ENCODE measurements at regions of chr1 and their contacts with region 1.

Region 1: DNA sequence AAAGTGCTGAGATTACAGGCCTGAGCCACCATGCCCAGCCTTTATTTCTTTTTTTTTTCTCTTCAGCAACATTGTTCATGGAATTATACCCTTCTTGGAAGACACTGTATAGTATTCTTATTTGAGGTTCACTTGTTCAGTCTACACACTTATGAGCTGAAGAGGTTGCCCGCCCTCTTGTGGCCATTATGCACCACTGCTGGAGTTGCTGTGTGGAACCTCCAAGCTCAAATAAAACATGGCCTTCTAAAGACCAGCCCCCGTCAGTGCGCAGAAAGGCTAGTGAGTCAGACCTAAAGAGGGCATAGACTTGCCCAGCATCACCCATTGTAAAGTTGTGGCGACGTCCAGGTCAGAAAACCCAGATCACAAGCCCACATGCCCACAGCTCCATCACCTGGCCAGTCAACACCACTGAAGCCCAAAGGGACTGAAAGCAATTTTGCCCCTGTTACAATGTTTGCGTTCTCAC is 20.4 kb downstream of the LURAP1 start:
- DNase-seq: peak; percentile 87
- H3K4me3 ChIP-seq: no peak overlapping the region
- H3K27ac ChIP-seq: no peak overlapping the region
- H3K4me1 ChIP-seq: peaks cover 2% of the 10 kb centered on the region
- H3K27me3 ChIP-seq: no peaks in the 10 kb centered on the region
- CTCF ChIP-seq: peak; percentile 88 to 98
- POLR2A ChIP-seq: no peak

Region 2: DNA sequence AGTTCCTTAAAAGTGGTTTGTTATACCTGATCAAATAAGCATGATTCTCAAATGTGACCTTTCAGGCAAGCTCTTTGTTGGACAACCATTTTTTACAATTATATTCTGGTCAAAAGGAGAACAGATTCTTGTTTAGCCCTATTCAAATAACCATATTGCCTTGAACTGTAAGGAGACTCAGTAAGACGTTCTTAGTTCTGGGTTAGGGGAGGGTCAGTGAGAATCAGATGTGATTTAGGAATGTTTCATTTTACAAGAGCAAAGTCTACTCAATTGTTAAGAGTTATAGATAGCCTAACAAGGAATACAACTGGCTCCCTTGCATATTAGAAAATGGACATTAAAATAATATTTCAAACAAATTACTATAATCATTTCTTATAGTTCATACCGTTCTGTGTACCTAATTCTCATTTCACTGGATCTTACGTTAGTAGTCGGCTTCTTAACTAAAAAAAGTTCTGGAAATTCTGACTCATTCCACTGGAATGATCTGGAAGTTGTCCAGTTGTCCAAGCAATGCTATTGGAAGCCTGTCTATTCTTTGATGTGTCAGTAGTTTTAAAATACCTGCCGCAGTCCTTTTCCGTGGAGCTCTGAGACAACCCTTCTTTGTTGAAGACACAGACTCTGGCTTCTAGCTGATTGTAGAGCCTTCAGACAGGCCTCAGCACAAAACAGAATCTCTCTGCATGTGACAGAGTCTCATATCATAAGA is 331.3 kb before region 1 on chr1:
- CTCF ChIA-PET with region 1: no interaction called
- POLR2A ChIA-PET with region 1: no interaction called
- dilution Hi-C with region 1: no loop called
- intact Hi-C with region 1: loop called (anchors 5 kb)
- DNase-seq: peak; percentile 94
- H3K4me3 ChIP-seq: peak overlapping the region in 1 of 3 experiments; percentile 32
- H3K27ac ChIP-seq: peak overlapping the region; percentile 60
- H3K4me1 ChIP-seq: peaks cover 17% of the 10 kb centered on the region
- H3K27me3 ChIP-seq: no peaks in the 10 kb centered on the region
- CTCF ChIP-seq: no peak
- POLR2A ChIP-seq: peak; percentile 32

Region 3: DNA sequence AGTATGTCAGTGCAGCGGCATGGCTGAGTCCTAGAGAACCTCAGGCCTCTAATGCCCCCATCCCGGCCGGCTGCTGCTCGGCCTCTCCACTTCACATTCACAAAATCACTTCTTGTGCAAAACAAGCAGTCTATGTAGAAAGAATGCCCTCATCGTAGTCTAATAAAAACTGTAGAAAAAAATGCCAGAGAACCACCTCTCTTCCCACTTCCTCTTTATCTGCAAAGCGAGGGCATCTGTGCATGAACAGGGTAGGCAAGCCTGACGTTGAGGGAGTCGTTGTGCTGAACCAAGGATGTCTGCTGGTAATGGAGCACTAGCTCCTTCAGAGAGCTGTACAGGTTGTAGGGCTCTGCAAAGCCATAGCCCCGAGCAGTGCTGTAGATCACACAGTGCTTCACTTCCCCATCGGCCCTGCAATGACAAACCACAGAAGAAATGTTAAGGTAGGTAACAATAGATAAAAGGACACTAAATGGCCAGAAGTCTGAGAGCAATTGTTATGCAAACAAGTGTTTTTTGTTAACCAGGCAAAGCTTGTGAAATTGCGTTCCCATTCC is 180.0 kb before region 1 on chr1:
- CTCF ChIA-PET with region 1: interaction called, 146 read pairs
- POLR2A ChIA-PET with region 1: no interaction called
- dilution Hi-C with region 1: no loop called
- intact Hi-C with region 1: no loop called
- DNase-seq: no peak
- H3K4me3 ChIP-seq: no peak overlapping the region
- H3K27ac ChIP-seq: no peak overlapping the region
- H3K4me1 ChIP-seq: peaks cover 4% of the 10 kb centered on the region
- H3K27me3 ChIP-seq: no peaks in the 10 kb centered on the region
- CTCF ChIP-seq: no peak
- POLR2A ChIP-seq: no peak

Region 4: DNA sequence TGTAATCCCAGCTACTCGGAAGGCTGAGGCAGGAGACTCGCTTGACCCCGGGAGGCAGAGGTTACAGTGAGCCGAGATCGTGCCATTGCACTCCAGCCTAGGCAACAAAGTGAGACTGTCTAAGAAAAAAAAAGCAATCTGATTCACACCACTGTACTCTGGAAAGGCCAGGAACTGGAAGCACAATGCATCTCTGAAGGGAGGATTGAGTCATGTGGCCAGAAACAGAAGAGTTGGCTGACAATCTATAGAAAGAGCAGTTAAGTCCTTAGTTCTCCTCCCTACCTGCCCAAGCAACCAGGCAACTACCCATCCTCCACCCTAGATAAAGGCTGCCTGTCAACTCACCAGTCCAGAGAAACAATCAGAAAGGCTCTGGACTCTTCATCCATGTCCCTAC is 136.9 kb before region 1 on chr1:
- CTCF ChIA-PET with region 1: no interaction called
- POLR2A ChIA-PET with region 1: no interaction called
- dilution Hi-C with region 1: no loop called
- intact Hi-C with region 1: no loop called
- DNase-seq: no peak
- H3K4me3 ChIP-seq: no peak overlapping the region
- H3K27ac ChIP-seq: no peak overlapping the region
- H3K4me1 ChIP-seq: peaks cover 6% of the 10 kb centered on the region
- H3K27me3 ChIP-seq: no peaks in the 10 kb centered on the region
- CTCF ChIP-seq: no peak
- POLR2A ChIP-seq: no peak

Region 5: DNA sequence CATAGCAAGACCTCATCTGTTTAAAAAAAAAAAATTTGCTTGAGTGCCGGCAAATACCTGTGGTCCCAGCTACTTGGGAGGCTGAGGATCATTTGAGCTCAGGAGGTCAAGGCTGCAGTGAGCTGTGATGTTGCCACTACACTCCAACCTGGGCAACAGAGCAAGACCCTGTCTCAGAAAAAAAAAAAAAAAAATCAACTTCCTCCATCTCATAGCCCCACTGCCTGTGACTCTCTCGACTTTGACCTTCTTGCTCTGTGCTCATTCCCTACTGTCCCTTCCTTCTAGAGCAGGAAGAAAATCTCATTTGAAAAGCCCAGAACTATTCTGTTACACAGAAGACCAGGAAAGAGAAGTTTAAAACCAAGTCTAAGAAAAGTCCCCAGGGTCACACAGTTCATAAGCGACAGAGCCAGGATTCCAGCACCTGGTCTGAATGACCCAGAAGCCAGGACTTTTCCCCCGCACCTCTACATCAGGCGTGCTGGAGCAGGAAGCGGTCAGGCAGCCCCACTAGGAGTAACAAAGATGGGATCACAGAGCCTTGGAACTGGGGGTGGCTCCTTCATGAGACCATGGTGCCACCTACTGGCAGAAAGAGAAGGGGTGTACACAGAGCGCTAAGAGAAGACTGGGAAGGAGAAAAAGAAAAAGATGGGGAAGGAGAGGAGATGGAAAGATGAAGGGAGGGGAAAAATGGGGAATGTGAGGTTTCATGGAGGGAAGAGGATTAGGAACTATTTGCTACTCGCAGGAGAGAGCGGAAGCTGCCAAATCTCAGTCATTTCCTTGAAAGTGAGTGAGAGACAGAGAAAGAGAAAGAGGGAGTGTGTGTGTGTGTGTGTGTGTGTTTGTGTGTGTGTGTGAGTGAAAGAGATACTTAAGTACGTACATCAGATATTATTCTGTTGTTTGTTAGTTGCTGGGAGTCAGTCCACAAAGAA is 44.1 kb before region 1 on chr1:
- CTCF ChIA-PET with region 1: interaction called, 67 read pairs
- POLR2A ChIA-PET with region 1: no interaction called
- dilution Hi-C with region 1: no loop called
- intact Hi-C with region 1: loop called (anchors 1 kb)
- DNase-seq: peak; percentile 77
- H3K4me3 ChIP-seq: no peak overlapping the region
- H3K27ac ChIP-seq: no peak overlapping the region
- H3K4me1 ChIP-seq: peaks cover 27% of the 10 kb centered on the region
- H3K27me3 ChIP-seq: no peaks in the 10 kb centered on the region
- CTCF ChIP-seq: peak; percentile 81 to 82
- POLR2A ChIP-seq: no peak

Region 6: GRCh38 chr1:46203738-46204405 is 19.6 kb before region 1 on chr1:
- CTCF ChIA-PET with region 1: interaction called, 35 read pairs
- POLR2A ChIA-PET with region 1: no interaction called
- dilution Hi-C with region 1: no loop called
- intact Hi-C with region 1: no loop called
- DNase-seq: peak; percentile 7
- H3K4me3 ChIP-seq: peak overlapping the region; percentile 65 to 90 (median 80)
- H3K27ac ChIP-seq: no peak overlapping the region
- H3K4me1 ChIP-seq: peaks cover 8% of the 10 kb centered on the region
- H3K27me3 ChIP-seq: no peaks in the 10 kb centered on the region
- CTCF ChIP-seq: no peak
- POLR2A ChIP-seq: no peak

Region 7: DNA sequence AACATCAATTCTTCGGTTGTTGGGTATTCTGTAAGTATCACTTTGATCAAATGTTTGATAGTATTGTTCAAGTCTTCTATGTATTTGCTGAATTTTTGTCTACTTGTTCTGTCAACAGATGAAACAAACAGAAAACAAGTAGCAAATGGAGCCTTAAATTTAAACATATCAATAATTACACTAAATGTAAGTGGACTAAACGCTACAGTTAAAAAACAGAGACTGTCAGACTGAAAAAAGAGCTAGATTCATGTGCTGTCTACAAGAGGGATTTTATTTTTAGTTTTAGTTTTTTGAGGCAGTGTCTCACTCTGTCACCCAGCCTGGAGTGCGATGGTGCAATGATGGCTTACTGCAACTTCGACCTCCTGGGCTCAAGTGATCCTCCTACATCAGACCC is 13.4 kb after region 1 on chr1:
- CTCF ChIA-PET with region 1: interaction called, 23 read pairs
- POLR2A ChIA-PET with region 1: no interaction called
- dilution Hi-C with region 1: no loop called
- intact Hi-C with region 1: no loop called
- DNase-seq: no peak
- H3K4me3 ChIP-seq: no peak overlapping the region
- H3K27ac ChIP-seq: no peak overlapping the region
- H3K4me1 ChIP-seq: no peaks in the 10 kb centered on the region
- H3K27me3 ChIP-seq: no peaks in the 10 kb centered on the region
- CTCF ChIP-seq: no peak
- POLR2A ChIP-seq: no peak

Measured in endothelial cell of umbilical vein (primary cell).